Naive thymus-derived CD4-positive, alpha-beta T cell (primary cell): ENCODE measurements at regions of chr21 and their contacts with region 1.

Region 1: DNA sequence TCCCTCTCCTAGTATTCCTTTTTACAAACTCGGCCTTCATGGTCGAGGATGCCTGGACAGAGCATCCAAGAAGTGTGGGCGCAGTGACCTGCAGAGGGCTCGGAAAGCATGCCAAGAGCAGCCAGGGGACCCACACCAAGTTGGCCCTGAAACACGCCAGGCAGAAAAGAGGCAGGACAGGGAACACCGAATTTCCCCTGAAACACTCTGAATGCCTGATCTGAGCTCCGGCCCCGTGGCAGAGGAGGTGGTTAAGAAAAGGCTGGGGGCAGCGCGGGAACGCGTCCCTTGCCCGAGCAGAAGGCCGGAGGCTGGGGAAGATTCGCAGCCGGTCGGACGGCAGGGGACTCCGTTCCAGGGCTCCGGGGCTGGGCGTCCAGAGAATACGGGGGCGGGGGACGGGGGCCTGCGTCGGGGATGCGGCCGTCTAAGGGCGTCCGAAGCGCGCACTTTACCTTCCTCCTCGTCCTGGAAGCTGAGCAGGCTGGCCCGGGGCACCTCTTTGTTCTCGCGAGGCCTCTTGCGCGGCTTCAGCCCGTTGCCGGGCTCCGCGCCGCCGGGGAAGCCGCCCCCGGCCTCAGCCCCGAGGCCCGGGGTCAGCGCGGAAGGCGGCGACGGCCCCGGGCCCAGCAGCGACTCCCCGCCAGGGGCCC is 558 bp downstream of the PAXBP1 start:
- DNase-seq: peak in 1 of 9 donors; percentile 42
- ATAC-seq: peak; percentile 36
- H3K4me3 ChIP-seq: peak overlapping the region; percentile 77
- H3K4me3 Mint-ChIP-seq: peak overlapping the region; percentile 90 to 97 (median 94)
- H3K27ac ChIP-seq: peak overlapping the region; percentile 79
- H3K27ac Mint-ChIP-seq: peak overlapping the region; percentile 90 to 99 (median 95)
- H3K4me1 ChIP-seq: peaks cover 29 to 31% of the 10 kb centered on the region in 2 donors
- H3K4me1 Mint-ChIP-seq: peaks cover 43 to 75% (median 66%) of the 10 kb centered on the region in 7 donors
- H3K27me3 ChIP-seq: no peaks in the 10 kb centered on the region
- H3K27me3 Mint-ChIP-seq: peaks cover 0 to 5% (median 0%) of the 10 kb centered on the region in 5 donors

Region 2: GRCh38 chr21:31731802-31732596 is 1039.0 kb before region 1 on chr21 and contains the start of gene SCAF4:
- CTCF ChIA-PET with region 1: no interaction called
- POLR2A ChIA-PET with region 1: no interaction called
- intact Hi-C with region 1: loop called in 1 of 2 experiments (anchors 2 kb)
- DNase-seq: peak; percentile 64 to 86 (median 72)
- ATAC-seq: peak; percentile 95
- H3K4me3 ChIP-seq: peak within 1 kb of the TSS; percentile 80
- H3K4me3 Mint-ChIP-seq: peak within 1 kb of the TSS in 6 of 10 donors; percentile 67 to 94 (median 90)
- H3K27ac ChIP-seq: peak within 1 kb of the TSS; percentile 95
- H3K27ac Mint-ChIP-seq: peak within 1 kb of the TSS; percentile 32 to 96 (median 83)
- H3K4me1 ChIP-seq: peaks cover 24 to 39% of the 10 kb centered on the region in 2 donors
- H3K4me1 Mint-ChIP-seq: peaks cover 13 to 19% (median 15%) of the 10 kb centered on the region in 7 donors
- H3K27me3 ChIP-seq: no peaks in the 10 kb centered on the region
- H3K27me3 Mint-ChIP-seq: peaks cover 0 to 2% (median 0%) of the 10 kb centered on the region in 5 donors
- total RNA-seq, gene SCAF4: 54.8 to 69.7 (median 64.7) TPM

Region 3: GRCh38 chr21:32612075-32612998 is 158.7 kb before region 1 on chr21 and contains the start of gene CFAP298:
- CTCF ChIA-PET with region 1: no interaction called
- POLR2A ChIA-PET with region 1: interaction called, 3 read pairs
- intact Hi-C with region 1: loop called (anchors 1 kb)
- DNase-seq: peak; percentile 78 to 93 (median 89)
- ATAC-seq: peak; percentile 97
- H3K4me3 ChIP-seq: peak within 1 kb of the TSS; percentile 100
- H3K4me3 Mint-ChIP-seq: peak within 1 kb of the TSS; percentile 95 to 98 (median 97)
- H3K27ac ChIP-seq: peak within 1 kb of the TSS; percentile 87
- H3K27ac Mint-ChIP-seq: peak within 1 kb of the TSS; percentile 90 to 98 (median 97)
- H3K4me1 ChIP-seq: peaks cover 12% of the 10 kb centered on the region in 2 donors
- H3K4me1 Mint-ChIP-seq: peaks cover 0 to 34% (median 12%) of the 10 kb centered on the region in 7 donors
- H3K27me3 ChIP-seq: no peaks in the 10 kb centered on the region
- H3K27me3 Mint-ChIP-seq: peaks cover 0 to 15% (median 0%) of the 10 kb centered on the region in 5 donors
- total RNA-seq, gene CFAP298: 16.8 to 34.5 (median 31.3) TPM

Region 4: DNA sequence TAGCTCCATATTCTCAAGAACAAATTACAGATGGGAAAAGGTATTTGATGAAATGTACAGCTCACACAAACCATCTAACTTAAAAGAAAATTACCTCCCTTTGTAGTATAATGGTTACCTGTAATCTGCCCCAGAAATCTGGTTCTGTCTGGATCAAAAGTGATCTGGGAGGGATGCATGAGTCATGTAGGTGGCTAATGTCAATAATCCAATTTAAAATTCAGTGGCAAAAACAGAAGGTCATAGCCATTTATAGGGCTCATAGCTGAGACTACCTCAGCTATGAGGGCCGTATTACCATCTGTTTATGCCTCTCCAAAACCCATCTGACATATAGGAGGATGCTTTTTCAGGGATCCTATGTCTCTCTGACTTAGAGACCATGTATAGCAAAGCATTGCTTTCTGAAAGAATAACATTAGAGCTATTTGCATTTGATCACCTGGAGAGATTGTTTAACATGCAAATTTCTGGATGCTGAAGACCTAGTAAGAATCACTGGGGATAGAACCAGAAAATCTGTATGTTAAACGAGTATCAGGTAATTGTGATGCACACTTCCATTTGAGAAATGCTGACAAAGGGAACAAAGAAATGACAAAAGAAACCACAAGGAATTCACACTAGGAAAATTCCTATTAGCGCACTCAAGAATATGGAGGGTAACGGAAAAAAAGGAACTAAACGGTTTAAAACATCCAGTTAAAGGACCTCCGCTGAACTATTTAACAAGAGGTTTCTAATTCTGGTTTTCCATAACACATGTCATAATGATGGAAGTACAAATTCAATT is 17.0 kb before region 1 on chr21:
- CTCF ChIA-PET with region 1: interaction called, 3 read pairs
- POLR2A ChIA-PET with region 1: interaction called, 14 read pairs
- intact Hi-C with region 1: no loop called
- DNase-seq: no peak
- ATAC-seq: no peak
- H3K4me3 ChIP-seq: no peak overlapping the region
- H3K4me3 Mint-ChIP-seq: no peak overlapping the region
- H3K27ac ChIP-seq: no peak overlapping the region
- H3K27ac Mint-ChIP-seq: peak overlapping the region in 2 of 9 donors; percentile 38 to 51
- H3K4me1 ChIP-seq: no peaks in the 10 kb centered on the region
- H3K4me1 Mint-ChIP-seq: peaks cover 0 to 17% (median 9%) of the 10 kb centered on the region in 7 donors
- H3K27me3 ChIP-seq: no peaks in the 10 kb centered on the region
- H3K27me3 Mint-ChIP-seq: no peaks in the 10 kb centered on the region

Region 5: DNA sequence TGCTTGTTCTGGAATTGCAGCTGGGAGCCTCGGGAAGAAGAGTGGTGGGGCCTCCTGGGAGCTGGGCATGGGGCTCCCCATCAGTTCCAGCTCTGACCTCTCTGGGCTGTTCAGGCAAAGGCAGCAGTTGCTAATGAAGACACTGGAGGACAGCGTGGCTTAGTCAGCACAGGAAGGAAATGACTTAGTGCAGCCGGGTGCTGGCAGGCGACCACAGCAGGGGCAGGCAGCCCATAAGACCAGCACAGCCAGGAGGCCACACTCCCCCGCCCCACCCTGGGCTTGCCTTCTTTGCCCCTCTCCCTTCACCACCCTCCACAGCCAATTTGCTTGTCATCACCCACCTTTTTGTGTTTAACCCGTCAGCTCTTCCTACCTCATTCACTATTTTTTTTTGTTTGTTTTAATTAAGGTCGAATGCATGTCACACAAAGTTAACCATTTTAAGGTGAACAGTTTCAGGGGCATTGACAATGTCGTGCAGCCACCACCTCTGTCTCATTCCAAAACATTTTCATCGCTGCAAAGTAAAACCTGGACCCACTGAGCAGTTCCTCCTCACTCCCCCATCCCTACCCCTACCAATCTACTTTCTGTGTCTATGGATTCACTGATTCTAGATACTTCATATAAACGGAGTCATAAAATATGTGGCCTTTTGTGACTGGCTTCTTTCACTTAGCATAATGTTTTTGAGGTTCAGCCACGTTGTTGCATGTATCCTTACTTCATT is 265.6 kb after region 1 on chr21:
- CTCF ChIA-PET with region 1: no interaction called
- POLR2A ChIA-PET with region 1: no interaction called
- intact Hi-C with region 1: no loop called
- DNase-seq: no peak
- ATAC-seq: peak; percentile 95
- H3K4me3 ChIP-seq: no peak overlapping the region
- H3K4me3 Mint-ChIP-seq: peak overlapping the region in 1 of 10 donors; percentile 43
- H3K27ac ChIP-seq: no peak overlapping the region
- H3K27ac Mint-ChIP-seq: peak overlapping the region in 2 of 9 donors; percentile 21 to 55
- H3K4me1 ChIP-seq: peaks cover 0 to 5% of the 10 kb centered on the region in 2 donors
- H3K4me1 Mint-ChIP-seq: peaks cover 5 to 15% (median 10%) of the 10 kb centered on the region in 7 donors
- H3K27me3 ChIP-seq: peaks cover 0 to 7% of the 10 kb centered on the region in 2 donors
- H3K27me3 Mint-ChIP-seq: peaks cover 26 to 49% (median 42%) of the 10 kb centered on the region in 5 donors

Region 6: GRCh38 chr21:33199516-33200217 is 428.7 kb after region 1 on chr21:
- CTCF ChIA-PET with region 1: no interaction called
- POLR2A ChIA-PET with region 1: no interaction called
- intact Hi-C with region 1: loop called in 1 of 2 experiments (anchors 5 kb)
- DNase-seq: peak; percentile 31 to 88 (median 81)
- ATAC-seq: peak; percentile 91
- H3K4me3 ChIP-seq: no peak overlapping the region
- H3K4me3 Mint-ChIP-seq: no peak overlapping the region
- H3K27ac ChIP-seq: no peak overlapping the region
- H3K27ac Mint-ChIP-seq: peak overlapping the region in 7 of 9 donors; percentile 22 to 87 (median 52)
- H3K4me1 ChIP-seq: peaks cover under 1 to 9% of the 10 kb centered on the region in 2 donors
- H3K4me1 Mint-ChIP-seq: peaks cover 24 to 53% (median 42%) of the 10 kb centered on the region in 7 donors
- H3K27me3 ChIP-seq: no peaks in the 10 kb centered on the region
- H3K27me3 Mint-ChIP-seq: peaks cover 0 to 31% (median 0%) of the 10 kb centered on the region in 5 donors

Region 7: GRCh38 chr21:33479679-33480480 is 708.9 kb after region 1 on chr21 and contains the start of gene TMEM50B:
- CTCF ChIA-PET with region 1: no interaction called
- POLR2A ChIA-PET with region 1: interaction called, 9 read pairs
- intact Hi-C with region 1: loop called (anchors 1 to 5 kb)
- DNase-seq: peak; percentile 85 to 96 (median 94)
- ATAC-seq: peak; percentile 95
- H3K4me3 ChIP-seq: peak within 1 kb of the TSS; percentile 70
- H3K4me3 Mint-ChIP-seq: peak within 1 kb of the TSS; percentile 87 to 96 (median 96)
- H3K27ac ChIP-seq: peak within 1 kb of the TSS; percentile 89
- H3K27ac Mint-ChIP-seq: peak within 1 kb of the TSS; percentile 90 to 99 (median 95)
- H3K4me1 ChIP-seq: peaks cover 0 to 5% of the 10 kb centered on the region in 2 donors
- H3K4me1 Mint-ChIP-seq: peaks cover 7 to 33% (median 21%) of the 10 kb centered on the region in 7 donors
- H3K27me3 ChIP-seq: no peaks in the 10 kb centered on the region
- H3K27me3 Mint-ChIP-seq: peaks cover 0 to 15% (median 0%) of the 10 kb centered on the region in 5 donors
- total RNA-seq, gene TMEM50B: 38.3 to 108 (median 61.7) TPM

Region 8: GRCh38 chr21:34614633-34615486 is 1843.9 kb after region 1 on chr21 and contains the start of gene RCAN1:
- CTCF ChIA-PET with region 1: no interaction called
- POLR2A ChIA-PET with region 1: no interaction called
- intact Hi-C with region 1: loop called in 1 of 2 experiments (anchors 5 kb)
- DNase-seq: peak; percentile 70 to 87 (median 85)
- ATAC-seq: peak; percentile 99
- H3K4me3 ChIP-seq: peak within 1 kb of the TSS; percentile 67
- H3K4me3 Mint-ChIP-seq: peak within 1 kb of the TSS; percentile 83 to 96 (median 93)
- H3K27ac ChIP-seq: peak within 1 kb of the TSS; percentile 57
- H3K27ac Mint-ChIP-seq: peak within 1 kb of the TSS; percentile 82 to 95 (median 83)
- H3K4me1 ChIP-seq: peaks cover 4 to 12% of the 10 kb centered on the region in 2 donors
- H3K4me1 Mint-ChIP-seq: peaks cover 15 to 25% (median 20%) of the 10 kb centered on the region in 7 donors
- H3K27me3 ChIP-seq: no peaks in the 10 kb centered on the region
- H3K27me3 Mint-ChIP-seq: peaks cover 0 to 32% (median 0%) of the 10 kb centered on the region in 5 donors
- total RNA-seq, gene RCAN1: 3.0 to 8.1 (median 4.9) TPM